Activated naive CD8-positive, alpha-beta T cell treated with anti-CD3 and anti-CD28 coated beads, Interleukin-2, amount 10 ng/mL, durations not matched to agents 7 days and 5 days (primary cell): ENCODE measurements at regions of chr1 and their contacts with region 1.

Region 1: GRCh38 chr1:222643938-222644635 is 26.2 kb downstream of the MIA3 start:
- DNase-seq: peak; percentile 96
- ATAC-seq: peak; percentile 98
- H3K4me3 Mint-ChIP-seq: peak overlapping the region; percentile 97
- H3K27ac Mint-ChIP-seq: peak overlapping the region; percentile 98
- H3K4me1 Mint-ChIP-seq: peaks cover 14% of the 10 kb centered on the region
- H3K27me3 Mint-ChIP-seq: no peaks in the 10 kb centered on the region

Region 2: DNA sequence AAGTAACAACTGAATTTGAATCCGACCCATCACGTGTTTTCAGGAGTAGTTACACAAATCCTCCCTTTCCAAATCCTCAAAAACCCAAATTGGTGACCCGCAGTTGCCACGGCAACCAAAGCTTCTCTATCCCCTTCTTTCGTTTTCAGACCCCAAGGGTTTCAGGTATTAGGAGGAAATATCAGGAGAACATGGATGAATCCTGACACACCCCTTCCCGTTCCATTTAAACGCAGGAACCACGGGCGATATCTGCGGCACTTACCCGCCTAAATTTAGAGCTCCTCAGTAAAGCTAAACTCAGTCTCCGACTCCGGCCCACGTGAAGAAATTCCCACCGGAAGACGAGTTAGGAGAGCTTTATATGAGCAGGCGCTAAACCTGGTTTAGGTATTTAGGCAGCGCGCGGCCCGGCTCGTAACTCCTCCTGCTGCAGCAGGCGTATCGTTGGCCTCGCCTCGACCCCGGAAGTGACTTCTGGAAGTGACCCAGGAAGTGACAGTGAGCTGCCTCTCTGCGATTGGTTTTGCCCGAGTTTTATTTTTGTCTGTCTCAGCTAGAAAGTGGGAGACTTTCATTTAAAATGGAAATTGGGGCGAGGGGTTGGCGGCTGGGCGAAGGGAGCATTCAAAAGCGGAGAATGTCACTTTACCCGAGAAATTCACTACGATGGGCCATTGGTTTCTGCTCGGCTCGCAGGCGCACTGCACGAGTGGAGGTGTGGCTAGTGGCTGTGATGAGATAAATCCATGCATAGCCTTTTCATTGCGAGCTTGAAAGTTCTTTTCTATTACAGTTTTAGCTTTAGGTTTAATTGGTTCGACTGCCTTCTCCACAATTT is 54.4 kb before region 1 on chr1 and contains the start of gene TAF1A:
- POLR2A ChIA-PET with region 1: interaction called, 10 read pairs
- DNase-seq: peak; percentile 81
- ATAC-seq: peak; percentile 99
- H3K4me3 Mint-ChIP-seq: peak within 1 kb of the TSS; percentile 97
- H3K27ac Mint-ChIP-seq: peak within 1 kb of the TSS; percentile 94
- H3K4me1 Mint-ChIP-seq: peaks cover 25% of the 10 kb centered on the region
- H3K27me3 Mint-ChIP-seq: no peaks in the 10 kb centered on the region
- total RNA-seq, gene TAF1A: 12.1 to 14.4 TPM

Region 3: DNA sequence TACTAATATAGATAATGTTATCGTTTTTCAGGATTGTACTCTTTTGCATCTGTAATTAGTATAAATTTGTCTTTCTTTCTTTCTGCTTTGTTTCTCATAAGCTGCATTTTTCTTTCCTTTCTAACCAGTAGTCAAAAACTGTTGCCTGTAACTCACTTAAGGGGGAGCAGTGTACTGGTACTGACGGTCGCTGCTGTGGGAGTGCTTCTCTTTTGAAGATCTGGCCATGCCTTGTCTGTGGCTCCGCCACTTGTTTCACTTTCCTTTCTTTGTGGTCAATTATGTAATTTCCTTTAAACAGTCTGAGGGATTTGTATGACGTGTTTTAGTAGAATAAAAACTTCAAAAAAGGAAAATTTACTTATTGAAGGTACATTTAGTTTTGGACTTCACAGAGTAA is 10.8 kb after region 1 on chr1:
- POLR2A ChIA-PET with region 1: interaction called, 56 read pairs
- DNase-seq: peak; percentile 65
- ATAC-seq: peak; percentile 87
- H3K4me3 Mint-ChIP-seq: peak overlapping the region; percentile 65
- H3K27ac Mint-ChIP-seq: peak overlapping the region; percentile 93
- H3K4me1 Mint-ChIP-seq: peaks cover 59% of the 10 kb centered on the region
- H3K27me3 Mint-ChIP-seq: no peaks in the 10 kb centered on the region

Region 4: GRCh38 chr1:222713091-222713961 is 69.2 kb after region 1 on chr1:
- POLR2A ChIA-PET with region 1: interaction called, 35 read pairs
- DNase-seq: peak; percentile 86
- ATAC-seq: peak; percentile 67
- H3K4me3 Mint-ChIP-seq: peak overlapping the region; percentile 95
- H3K27ac Mint-ChIP-seq: peak overlapping the region; percentile 97
- H3K4me1 Mint-ChIP-seq: peaks cover 35% of the 10 kb centered on the region
- H3K27me3 Mint-ChIP-seq: no peaks in the 10 kb centered on the region